ENCODE measurements at regions of chr10 and their contacts with region 1.

Region 1: GRCh38 chr10:28241741-28242399 is 61.0 kb downstream of the MPP7 start:
- DNase-seq: peak; percentile 53
- ATAC-seq: peak; percentile 83
- H3K4me3 ChIP-seq: no peak overlapping the region
- H3K27ac ChIP-seq: no peak overlapping the region
- H3K4me1 ChIP-seq: peaks cover 27% of the 10 kb centered on the region
- H3K27me3 ChIP-seq: no peaks in the 10 kb centered on the region
- CTCF ChIP-seq: peak; percentile 81
- EP300 ChIP-seq: no peak
- POLR2A ChIP-seq: no peak
- RAD21 ChIP-seq: peak; percentile 49; the same call in 1 of the 2 replicates

Region 2: DNA sequence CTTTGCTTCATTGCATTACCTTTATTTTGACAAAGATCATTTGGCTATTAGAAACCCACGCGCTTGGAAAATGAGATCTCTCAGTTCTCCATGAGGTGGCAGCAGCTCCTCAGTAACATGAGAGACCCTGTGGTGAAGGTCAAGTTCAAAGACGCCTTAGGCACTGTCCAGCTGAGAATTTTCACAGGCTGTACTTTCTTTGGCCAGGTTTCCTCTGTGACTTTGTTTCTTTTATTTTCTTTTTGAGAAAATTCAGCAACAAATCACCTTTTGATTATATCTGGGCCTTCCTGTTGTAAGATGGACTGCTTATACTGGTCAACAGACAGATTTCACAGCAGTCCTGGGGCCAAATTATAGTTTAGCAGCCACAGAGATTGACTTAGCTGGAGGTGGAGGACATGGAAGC is 683.3 kb before region 1 on chr10:
- CTCF ChIA-PET with region 1: no interaction called
- POLR2A ChIA-PET with region 1: no interaction called
- in situ Hi-C with region 1: loop called (anchors 25 kb)
- intact Hi-C with region 1: loop called (anchors 2 kb)
- DNase-seq: peak; percentile 68
- ATAC-seq: peak; percentile 69
- H3K4me3 ChIP-seq: no peak overlapping the region
- H3K27ac ChIP-seq: no peak overlapping the region
- H3K4me1 ChIP-seq: no peaks in the 10 kb centered on the region
- H3K27me3 ChIP-seq: no peaks in the 10 kb centered on the region
- CTCF ChIP-seq: peak; percentile 81
- EP300 ChIP-seq: no peak
- POLR2A ChIP-seq: no peak
- RAD21 ChIP-seq: peak; percentile 74

Region 3: DNA sequence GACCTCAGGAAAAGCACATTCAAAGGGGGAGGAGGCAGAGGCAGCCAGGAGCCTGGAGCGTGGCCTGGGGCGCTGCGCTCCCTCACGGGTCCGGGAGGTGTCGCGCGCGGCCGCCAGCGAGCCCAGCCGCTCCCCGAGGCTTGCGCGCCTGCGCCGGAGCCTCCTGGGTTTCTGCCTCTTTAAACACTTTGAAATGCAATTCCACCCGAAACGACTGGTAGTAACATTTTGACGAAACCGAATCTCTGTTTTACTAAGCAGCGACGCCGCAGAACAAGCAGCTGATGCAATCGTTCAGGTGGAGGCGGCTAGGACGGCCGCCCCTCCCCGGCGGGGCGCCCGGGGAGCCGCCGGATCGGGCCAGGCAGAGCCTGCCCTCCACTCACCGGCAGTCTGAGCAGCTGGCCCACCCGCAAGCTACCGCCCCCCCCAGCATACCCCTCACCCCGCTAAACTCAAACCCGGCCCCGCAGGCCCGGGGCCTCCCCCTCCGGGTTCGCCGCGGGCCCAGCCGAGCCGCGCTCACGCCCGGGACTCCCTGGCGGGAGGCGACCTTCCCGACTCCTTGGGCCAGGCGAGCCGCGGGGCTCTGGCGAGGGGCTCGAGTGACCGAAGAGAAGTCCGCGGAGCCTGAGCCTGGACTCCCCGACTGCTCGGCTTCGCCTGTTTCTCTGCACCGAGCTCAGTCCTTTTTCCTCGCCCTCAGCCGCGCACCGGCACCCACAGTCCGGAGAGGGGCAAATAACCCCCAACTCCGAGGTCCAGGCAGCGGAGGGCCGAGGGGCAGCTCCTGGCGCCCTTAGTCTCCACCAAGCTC is 499.5 kb before region 1 on chr10:
- CTCF ChIA-PET with region 1: interaction called, 3 read pairs
- POLR2A ChIA-PET with region 1: no interaction called
- in situ Hi-C with region 1: no loop called
- intact Hi-C with region 1: loop called (anchors 1 kb)
- DNase-seq: peak; percentile 41
- ATAC-seq: peak; percentile 93
- H3K4me3 ChIP-seq: peak overlapping the region; percentile 61 to 79 (median 75)
- H3K27ac ChIP-seq: no peak overlapping the region
- H3K4me1 ChIP-seq: peaks cover 20% of the 10 kb centered on the region
- H3K27me3 ChIP-seq: peaks cover 8 to 36% of the 10 kb centered on the region in 2 experiments
- CTCF ChIP-seq: peak; percentile 80
- EP300 ChIP-seq: no peak
- POLR2A ChIP-seq: no peak
- RAD21 ChIP-seq: peak; percentile 85

Region 4: GRCh38 chr10:27783660-27784059 is 458.2 kb before region 1 on chr10:
- CTCF ChIA-PET with region 1: interaction called, 7 read pairs
- POLR2A ChIA-PET with region 1: no interaction called
- in situ Hi-C with region 1: no loop called
- intact Hi-C with region 1: loop called (anchors 2 kb)
- DNase-seq: peak; percentile 23
- ATAC-seq: peak; percentile 79
- H3K4me3 ChIP-seq: no peak overlapping the region
- H3K27ac ChIP-seq: no peak overlapping the region
- H3K4me1 ChIP-seq: no peaks in the 10 kb centered on the region
- H3K27me3 ChIP-seq: peaks cover 0 to 8% of the 10 kb centered on the region in 2 experiments; a peak in 1 of 5 replicates
- CTCF ChIP-seq: peak; percentile 49
- EP300 ChIP-seq: no peak
- POLR2A ChIP-seq: no peak
- RAD21 ChIP-seq: no peak

Region 5: GRCh38 chr10:28169525-28169924 is 72.3 kb before region 1 on chr10:
- CTCF ChIA-PET with region 1: no interaction called
- POLR2A ChIA-PET with region 1: no interaction called
- in situ Hi-C with region 1: no loop called
- intact Hi-C with region 1: no loop called
- DNase-seq: no peak
- ATAC-seq: no peak
- H3K4me3 ChIP-seq: no peak overlapping the region
- H3K27ac ChIP-seq: no peak overlapping the region
- H3K4me1 ChIP-seq: no peaks in the 10 kb centered on the region
- H3K27me3 ChIP-seq: no peaks in the 10 kb centered on the region; a peak in 1 of 5 replicates
- CTCF ChIP-seq: no peak
- EP300 ChIP-seq: no peak
- POLR2A ChIP-seq: no peak
- RAD21 ChIP-seq: no peak